ENCODE measurements at regions of chr5 and their contacts with region 1.

Region 1: DNA sequence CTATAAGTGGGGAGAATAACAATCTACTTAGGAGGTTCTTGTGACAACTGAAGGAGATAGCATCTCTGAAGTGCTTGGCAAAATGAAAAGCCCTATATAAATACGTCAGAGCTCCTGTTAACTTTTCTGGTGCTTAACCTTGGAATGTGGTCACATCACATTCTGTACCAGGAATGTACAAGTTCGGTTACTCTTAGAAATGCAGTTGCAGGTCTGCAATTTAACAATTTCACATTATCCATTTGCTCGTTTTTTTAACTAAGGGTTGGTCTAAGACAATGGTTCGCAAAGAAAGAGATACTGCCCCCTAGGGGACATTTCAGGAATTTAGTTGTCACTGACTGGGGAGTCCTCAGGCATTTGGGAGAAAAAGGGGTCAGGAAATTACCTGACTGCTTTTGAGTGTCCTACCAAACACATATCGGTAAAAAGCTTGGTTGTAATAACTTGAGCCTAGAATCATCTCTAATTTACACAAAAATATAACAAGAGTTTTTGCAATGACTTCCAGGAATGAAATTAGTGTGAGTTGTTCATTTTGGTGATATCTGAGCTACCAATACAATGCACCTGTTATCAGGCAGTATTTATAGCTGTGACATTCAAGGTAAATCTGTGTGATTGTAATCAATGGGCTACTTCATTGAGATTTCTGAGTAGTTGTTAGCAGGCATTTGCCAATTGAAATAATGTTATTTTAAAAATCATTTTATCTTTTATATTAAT is 5.4 kb upstream of the HBEGF start:
- DNase-seq: peak; percentile 60
- H3K4me3 Mint-ChIP-seq: no peak overlapping the region
- H3K27ac Mint-ChIP-seq: peak overlapping the region; percentile 53
- H3K4me1 Mint-ChIP-seq: peaks cover 41% of the 10 kb centered on the region
- H3K27me3 Mint-ChIP-seq: peaks cover 4% of the 10 kb centered on the region

Region 2: GRCh38 chr5:140322751-140323731 is 28.7 kb before region 1 on chr5:
- CTCF ChIA-PET with region 1: interaction called, 11 read pairs
- POLR2A ChIA-PET with region 1: no interaction called
- DNase-seq: no peak
- H3K4me3 Mint-ChIP-seq: no peak overlapping the region
- H3K27ac Mint-ChIP-seq: no peak overlapping the region
- H3K4me1 Mint-ChIP-seq: no peaks in the 10 kb centered on the region
- H3K27me3 Mint-ChIP-seq: peaks cover 5% of the 10 kb centered on the region

Region 3: GRCh38 chr5:140362860-140363630 is 11.3 kb after region 1 on chr5:
- CTCF ChIA-PET with region 1: interaction called, 19 read pairs
- POLR2A ChIA-PET with region 1: no interaction called
- DNase-seq: peak; percentile 87
- H3K4me3 Mint-ChIP-seq: peak overlapping the region; percentile 71
- H3K27ac Mint-ChIP-seq: no peak overlapping the region
- H3K4me1 Mint-ChIP-seq: peaks cover 12% of the 10 kb centered on the region
- H3K27me3 Mint-ChIP-seq: peaks cover 3% of the 10 kb centered on the region